CD4-positive, alpha-beta T cell (primary cell): ENCODE measurements at regions of chr14 and their contacts with region 1.

Region 1: DNA sequence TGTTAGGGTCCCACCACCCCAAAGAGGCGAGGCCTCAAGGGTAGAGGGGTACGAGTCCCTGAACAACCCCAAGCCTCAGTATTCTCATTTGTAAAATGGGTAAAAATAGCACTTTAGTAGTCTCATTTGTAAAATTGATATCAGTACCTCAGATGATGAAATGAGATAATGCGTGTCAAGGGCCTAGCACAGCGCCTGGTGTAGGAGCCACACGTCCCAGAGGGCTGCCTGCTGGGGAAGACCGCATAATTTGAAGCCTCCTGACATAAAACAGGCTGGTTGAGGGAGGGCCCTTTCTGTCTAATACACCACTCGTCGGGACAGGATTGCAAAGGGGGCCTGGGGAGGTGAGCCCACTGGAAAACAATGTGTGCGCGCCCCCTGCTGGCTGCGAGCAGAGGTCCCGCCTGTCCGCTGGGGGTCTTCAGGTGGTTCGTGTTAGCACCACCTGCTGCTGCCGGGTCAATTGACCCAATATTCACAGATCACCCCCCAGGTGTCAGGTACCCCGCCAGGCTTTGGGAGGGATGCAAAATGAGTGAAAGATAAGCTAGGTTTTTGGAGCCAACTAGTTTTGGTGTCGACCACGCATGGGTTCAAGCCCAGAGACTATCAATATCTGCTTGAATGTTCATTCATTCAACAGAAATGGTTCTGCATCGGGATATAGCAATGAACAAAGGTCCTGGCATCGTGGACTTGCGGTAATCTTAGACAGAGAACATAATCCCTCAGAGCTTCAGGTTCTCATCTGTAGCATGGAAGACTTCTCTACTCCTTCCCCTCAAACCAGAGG is 24.7 kb upstream of the IRF2BPL start:
- DNase-seq: peak; percentile 62 to 90 (median 72)
- ATAC-seq: peak; percentile 87
- H3K4me3 ChIP-seq: no peak overlapping the region
- H3K4me3 Mint-ChIP-seq: no peak overlapping the region
- H3K27ac ChIP-seq: no peak overlapping the region
- H3K27ac Mint-ChIP-seq: no peak overlapping the region
- H3K4me1 ChIP-seq: peaks cover 28% of the 10 kb centered on the region
- H3K4me1 Mint-ChIP-seq: peaks cover 18% of the 10 kb centered on the region
- H3K27me3 ChIP-seq: no peaks in the 10 kb centered on the region
- H3K27me3 Mint-ChIP-seq: no peaks in the 10 kb centered on the region
- CTCF ChIP-seq: peak; percentile 95

Region 2: GRCh38 chr14:77014004-77014604 is 39.1 kb before region 1 on chr14:
- CTCF ChIA-PET with region 1: interaction called, 5 read pairs
- POLR2A ChIA-PET with region 1: no interaction called
- intact Hi-C with region 1: loop called in 1 of 2 experiments (anchors 5 kb)
- DNase-seq: no peak
- ATAC-seq: no peak
- H3K4me3 ChIP-seq: no peak overlapping the region
- H3K4me3 Mint-ChIP-seq: no peak overlapping the region
- H3K27ac ChIP-seq: no peak overlapping the region
- H3K27ac Mint-ChIP-seq: no peak overlapping the region
- H3K4me1 ChIP-seq: peaks cover 16% of the 10 kb centered on the region
- H3K4me1 Mint-ChIP-seq: peaks cover 23% of the 10 kb centered on the region
- H3K27me3 ChIP-seq: no peaks in the 10 kb centered on the region
- H3K27me3 Mint-ChIP-seq: no peaks in the 10 kb centered on the region
- CTCF ChIP-seq: no peak